ENCODE measurements at regions of chr2 and their contacts with region 1.

Region 1: GRCh38 chr2:7857904-7858303 is 824.0 kb upstream of the ID2 start:
- DNase-seq: no peak
- H3K4me3 Mint-ChIP-seq: no peak overlapping the region
- H3K27ac Mint-ChIP-seq: no peak overlapping the region
- H3K4me1 Mint-ChIP-seq: peaks cover 8% of the 10 kb centered on the region
- H3K27me3 Mint-ChIP-seq: peaks cover 3% of the 10 kb centered on the region

Region 2: GRCh38 chr2:7203055-7203467 is 654.8 kb before region 1 on chr2:
- CTCF ChIA-PET with region 1: no interaction called
- POLR2A ChIA-PET with region 1: no interaction called
- intact Hi-C with region 1: loop called (anchors 10 kb)
- DNase-seq: peak; percentile 69
- H3K4me3 Mint-ChIP-seq: no peak overlapping the region
- H3K27ac Mint-ChIP-seq: no peak overlapping the region
- H3K4me1 Mint-ChIP-seq: no peaks in the 10 kb centered on the region
- H3K27me3 Mint-ChIP-seq: no peaks in the 10 kb centered on the region

Region 3: GRCh38 chr2:8394131-8394530 is 536.2 kb after region 1 on chr2:
- CTCF ChIA-PET with region 1: no interaction called
- POLR2A ChIA-PET with region 1: no interaction called
- intact Hi-C with region 1: no loop called
- DNase-seq: no peak
- H3K4me3 Mint-ChIP-seq: no peak overlapping the region
- H3K27ac Mint-ChIP-seq: no peak overlapping the region
- H3K4me1 Mint-ChIP-seq: peaks cover 6% of the 10 kb centered on the region
- H3K27me3 Mint-ChIP-seq: no peaks in the 10 kb centered on the region

Measured in activated CD4-positive, alpha-beta memory T cell treated with anti-CD3 and anti-CD28 coated beads for 36 hours (primary cell).